Thyroid gland (tissue), 4 donors: ENCODE measurements at regions of chr13 and their contacts with region 1.

Region 1: DNA sequence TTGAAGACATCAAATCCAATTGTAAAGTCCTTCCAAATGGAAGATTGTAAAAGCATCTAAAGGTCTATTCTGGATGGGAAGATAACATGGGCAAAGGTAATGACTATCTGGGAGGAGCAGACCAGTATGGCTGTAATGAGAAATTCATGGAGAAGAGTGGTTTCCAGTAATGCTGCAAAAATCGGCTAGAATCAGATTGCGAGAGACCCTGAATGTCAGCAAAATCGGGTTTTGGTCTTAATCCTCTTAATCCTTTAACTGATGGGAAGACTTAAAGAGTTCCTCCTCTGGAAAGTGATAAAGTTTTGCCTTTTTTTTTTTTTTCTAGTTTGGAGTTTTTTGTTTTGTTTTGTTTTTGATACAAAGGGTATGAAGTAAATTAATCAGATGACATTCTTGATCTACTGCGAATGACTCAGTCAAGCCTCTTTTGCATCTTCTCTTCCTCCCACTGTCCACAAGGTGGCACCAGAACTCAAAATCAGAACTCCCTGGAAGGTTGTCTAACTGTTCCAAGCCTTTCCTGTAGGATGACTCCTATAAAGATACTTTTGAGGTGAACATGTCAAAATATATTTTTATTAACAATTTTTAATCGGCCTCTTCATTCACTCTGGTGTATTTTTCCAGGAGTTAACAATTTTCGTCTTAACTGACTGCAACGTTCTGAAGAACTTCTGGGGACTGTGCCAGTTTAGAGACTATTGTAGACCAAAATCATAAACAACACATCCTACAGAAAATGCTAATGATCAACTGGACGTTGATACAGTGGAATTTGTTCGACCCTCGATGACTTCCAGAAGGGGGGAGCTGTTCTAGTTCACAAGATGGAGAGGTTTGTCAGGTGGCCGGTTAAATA is 213.3 kb upstream of the MIR17HG start:
- DNase-seq: peak; percentile 31 to 50
- H3K4me3 ChIP-seq: no peak overlapping the region
- H3K27ac ChIP-seq: no peak overlapping the region
- H3K4me1 ChIP-seq: peaks cover 0 to 4% of the 10 kb centered on the region in 2 donors
- H3K27me3 ChIP-seq: no peaks in the 10 kb centered on the region
- CTCF ChIP-seq: peak; percentile 19 to 76 (median 60)
- POLR2A ChIP-seq: no peak

Region 2: DNA sequence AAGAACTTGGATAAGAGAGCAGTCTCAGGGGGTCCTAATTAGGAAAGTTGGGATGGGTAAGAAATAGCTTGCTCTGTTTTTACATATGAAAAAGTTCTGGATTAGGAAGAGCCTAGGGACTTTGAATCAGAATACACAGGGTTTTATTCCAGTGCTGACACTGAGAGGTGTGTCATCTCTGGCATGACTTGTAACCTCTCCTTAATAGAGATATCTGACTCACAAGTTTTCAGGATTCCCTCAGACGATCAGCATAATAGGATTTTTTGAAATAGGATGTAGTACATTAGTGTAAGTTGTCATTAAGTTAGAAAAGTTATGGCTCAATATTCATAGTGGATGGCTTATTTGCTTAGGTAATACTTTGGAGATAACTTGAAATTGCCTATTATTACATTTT is 341.8 kb before region 1 on chr13:
- intact Hi-C with region 1: no loop called
- DNase-seq: no peak
- H3K4me3 ChIP-seq: no peak overlapping the region
- H3K27ac ChIP-seq: no peak overlapping the region
- H3K4me1 ChIP-seq: no peaks in the 10 kb centered on the region
- H3K27me3 ChIP-seq: no peaks in the 10 kb centered on the region
- CTCF ChIP-seq: no peak
- POLR2A ChIP-seq: no peak

Region 3: GRCh38 chr13:91185294-91185863 is 51.2 kb after region 1 on chr13:
- intact Hi-C with region 1: loop called (anchors 10 kb)
- DNase-seq: no peak
- H3K4me3 ChIP-seq: no peak overlapping the region
- H3K27ac ChIP-seq: no peak overlapping the region
- H3K4me1 ChIP-seq: no peaks in the 10 kb centered on the region
- H3K27me3 ChIP-seq: no peaks in the 10 kb centered on the region
- CTCF ChIP-seq: peak in 4 of 6 experiments; percentile 14 to 62 (median 50)
- POLR2A ChIP-seq: no peak

Region 4: DNA sequence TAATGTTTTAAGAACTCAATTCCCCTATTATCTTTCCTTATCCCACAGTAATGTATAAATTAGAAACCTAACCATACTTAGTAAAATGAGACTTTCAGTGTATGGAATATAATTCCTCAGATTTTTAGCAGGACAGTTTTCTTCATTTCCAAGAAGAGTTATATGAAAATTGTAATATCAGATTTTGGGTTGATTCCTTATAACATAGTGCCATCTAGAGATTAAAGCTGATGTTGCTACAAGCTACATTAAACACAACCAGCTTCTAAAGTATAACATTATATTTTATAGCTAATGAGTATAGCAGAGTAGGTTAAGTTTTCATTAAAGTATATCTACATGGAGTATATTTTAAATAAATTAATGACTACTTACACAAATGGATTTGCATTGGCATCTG is 113.6 kb after region 1 on chr13:
- intact Hi-C with region 1: loop called (anchors 10 kb)
- DNase-seq: no peak
- H3K4me3 ChIP-seq: no peak overlapping the region
- H3K27ac ChIP-seq: no peak overlapping the region
- H3K4me1 ChIP-seq: no peaks in the 10 kb centered on the region
- H3K27me3 ChIP-seq: no peaks in the 10 kb centered on the region
- CTCF ChIP-seq: peak in 3 of 6 experiments; percentile 20 to 40 (median 37)
- POLR2A ChIP-seq: no peak